Esophagus muscularis mucosa (tissue), 4 donors: ENCODE measurements at regions of chr4 and their contacts with region 1.

Region 1: GRCh38 chr4:173013232-173013930 is 155.2 kb upstream of the GALNT7 start:
- DNase-seq: no peak
- H3K4me3 ChIP-seq: no peak overlapping the region
- H3K27ac ChIP-seq: no peak overlapping the region
- H3K4me1 ChIP-seq: peaks cover 0 to 8% (median 0%) of the 10 kb centered on the region in 4 donors
- H3K27me3 ChIP-seq: no peaks in the 10 kb centered on the region
- CTCF ChIP-seq: peak; percentile 60 to 89 (median 86)
- EP300 ChIP-seq: no peak
- POLR2A ChIP-seq: no peak

Region 2: DNA sequence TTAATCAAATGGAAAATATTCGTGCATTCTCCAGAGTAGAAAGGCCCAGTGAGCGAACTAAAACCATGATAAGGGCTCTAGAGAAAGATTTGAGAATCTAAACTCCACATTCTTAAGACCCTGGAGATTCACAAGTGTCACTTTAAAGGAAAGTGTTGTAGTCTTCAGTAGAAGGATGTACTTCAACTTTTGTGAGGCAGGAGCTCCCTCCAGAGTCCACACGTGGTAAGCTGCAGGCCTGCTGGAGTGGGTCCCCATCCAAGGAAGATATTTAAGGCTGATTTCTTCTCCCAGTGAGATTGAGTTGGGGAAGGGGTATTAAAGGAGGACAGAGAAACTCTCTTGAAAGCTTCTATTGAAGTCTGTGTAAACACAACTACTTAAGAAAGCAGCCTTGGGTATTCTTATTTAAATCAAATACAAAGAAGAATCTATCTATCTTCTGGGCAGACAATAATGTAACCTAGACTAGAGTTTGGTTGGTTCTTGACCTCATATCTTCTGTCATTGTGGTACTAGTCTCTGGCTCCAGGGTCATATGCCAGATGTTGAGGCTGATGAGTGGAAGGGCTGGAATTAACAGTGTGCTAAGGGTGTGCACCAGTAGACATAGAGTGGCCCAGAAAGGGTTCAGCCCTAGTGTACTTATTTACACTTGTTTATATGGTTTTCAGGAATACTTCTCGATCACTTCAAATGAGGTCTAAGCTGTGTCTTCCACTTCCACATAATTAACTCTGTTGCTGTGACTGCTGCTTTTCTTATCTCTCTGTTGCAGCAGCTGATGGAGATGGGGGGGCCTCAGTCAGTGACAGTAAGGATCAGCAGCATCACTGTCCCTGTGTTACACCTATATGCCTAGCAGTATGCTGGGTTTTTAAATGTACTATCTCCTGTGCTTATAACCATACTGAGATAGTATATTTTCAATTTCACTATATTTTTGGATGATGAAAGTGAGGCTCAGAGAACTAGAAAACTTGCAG is 244.6 kb after region 1 on chr4:
- intact Hi-C with region 1: loop called (anchors 5 kb)
- DNase-seq: no peak
- H3K4me3 ChIP-seq: no peak overlapping the region
- H3K27ac ChIP-seq: no peak overlapping the region
- H3K4me1 ChIP-seq: peaks cover 0 to 4% (median 0%) of the 10 kb centered on the region in 4 donors
- H3K27me3 ChIP-seq: no peaks in the 10 kb centered on the region
- CTCF ChIP-seq: peak; percentile 78 to 84 (median 82)
- EP300 ChIP-seq: no peak
- POLR2A ChIP-seq: no peak

Region 3: DNA sequence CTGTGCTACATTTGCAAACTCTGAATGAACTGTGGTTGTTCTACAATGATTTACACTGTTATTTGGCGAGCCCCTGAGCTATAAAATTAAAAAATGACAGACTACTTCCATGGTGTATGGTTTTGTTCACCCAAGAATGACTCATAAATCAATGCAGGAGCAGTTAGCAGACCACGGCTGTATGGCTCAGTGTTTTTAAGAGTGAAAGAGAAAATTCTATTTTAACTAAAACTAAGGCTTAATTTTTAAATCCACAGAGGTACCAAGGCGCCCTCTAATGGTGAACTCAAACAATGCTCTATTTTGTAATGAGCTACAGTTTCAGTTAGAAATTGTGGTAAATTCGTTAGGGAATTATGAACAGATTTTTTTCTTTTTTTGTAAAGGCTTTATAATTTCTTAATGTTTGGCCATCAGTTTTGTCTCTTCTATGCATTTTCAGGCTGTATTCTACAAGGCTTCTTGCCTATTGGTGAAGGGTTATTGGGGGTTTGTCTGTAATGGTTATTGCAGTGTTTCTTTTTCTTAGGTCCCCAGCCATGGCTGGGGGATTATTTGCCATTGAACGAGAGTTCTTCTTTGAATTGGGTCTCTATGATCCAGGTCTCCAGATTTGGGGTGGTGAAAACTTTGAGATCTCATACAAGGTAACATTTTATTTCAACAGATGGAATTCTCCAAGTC is 288.3 kb after region 1 on chr4:
- intact Hi-C with region 1: loop called (anchors 5 kb)
- DNase-seq: no peak
- H3K4me3 ChIP-seq: no peak overlapping the region
- H3K27ac ChIP-seq: no peak overlapping the region
- H3K4me1 ChIP-seq: peaks cover 0 to 9% (median 6%) of the 10 kb centered on the region in 4 donors
- H3K27me3 ChIP-seq: no peaks in the 10 kb centered on the region
- CTCF ChIP-seq: peak; percentile 48 to 72 (median 62)
- EP300 ChIP-seq: no peak
- POLR2A ChIP-seq: no peak